ENCODE measurements at regions of chr22 and their contacts with region 1.

Region 1: DNA sequence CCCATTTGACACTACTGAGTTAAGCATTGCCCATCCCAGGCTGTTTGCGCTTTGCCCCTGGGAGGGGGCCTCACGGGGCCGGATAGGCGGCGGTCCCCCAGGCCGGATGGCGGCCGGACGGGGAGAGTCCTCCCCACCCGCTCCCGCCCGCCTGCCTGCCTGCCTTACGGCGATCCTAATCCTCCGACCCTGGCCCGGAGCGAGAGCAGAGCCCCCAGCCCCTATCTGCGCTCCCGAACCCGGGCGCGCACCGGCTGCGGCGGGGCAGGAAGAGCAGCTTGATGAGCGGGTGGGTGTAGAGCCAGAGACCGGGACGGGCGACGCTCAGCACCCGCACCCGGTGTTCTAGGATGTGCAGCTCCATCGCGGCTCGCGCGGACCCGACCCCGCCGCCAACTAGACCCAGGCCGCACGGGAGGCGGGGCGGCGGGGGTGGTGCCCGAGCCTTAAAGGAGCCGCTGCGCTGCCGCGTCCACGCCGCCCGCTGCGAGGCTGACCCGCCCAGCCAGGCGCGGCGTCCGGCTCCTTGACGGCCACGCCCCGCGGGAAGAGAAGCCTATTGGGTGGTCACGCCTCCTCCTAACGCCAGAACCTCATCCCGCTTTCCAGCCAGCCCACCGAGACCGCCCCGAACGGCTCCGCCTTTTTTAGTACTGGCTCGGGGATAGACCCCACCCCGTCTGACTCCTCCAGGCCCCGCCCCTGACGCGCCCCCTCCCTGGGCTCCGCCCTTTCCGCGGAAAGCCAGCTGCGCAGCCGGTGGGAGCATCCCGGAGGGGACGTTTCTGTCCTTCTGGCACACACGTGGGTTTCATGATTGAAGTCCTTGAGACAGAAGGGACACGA is at the start of gene CASTOR1:
- DNase-seq: peak; percentile 93
- H3K4me3 Mint-ChIP-seq: peak within 1 kb of the TSS; percentile 77
- H3K27ac Mint-ChIP-seq: peak within 1 kb of the TSS; percentile 8
- H3K4me1 Mint-ChIP-seq: peaks cover 31% of the 10 kb centered on the region
- H3K27me3 Mint-ChIP-seq: no peaks in the 10 kb centered on the region
- total RNA-seq, gene CASTOR1: 2.1 to 3.8 TPM

Region 2: GRCh38 chr22:29780748-29781676 is 508.3 kb before region 1 on chr22:
- CTCF ChIA-PET with region 1: no interaction called
- intact Hi-C with region 1: no loop called
- DNase-seq: no peak
- H3K4me3 Mint-ChIP-seq: no peak overlapping the region
- H3K27ac Mint-ChIP-seq: no peak overlapping the region
- H3K4me1 Mint-ChIP-seq: no peaks in the 10 kb centered on the region
- H3K27me3 Mint-ChIP-seq: no peaks in the 10 kb centered on the region

Region 3: DNA sequence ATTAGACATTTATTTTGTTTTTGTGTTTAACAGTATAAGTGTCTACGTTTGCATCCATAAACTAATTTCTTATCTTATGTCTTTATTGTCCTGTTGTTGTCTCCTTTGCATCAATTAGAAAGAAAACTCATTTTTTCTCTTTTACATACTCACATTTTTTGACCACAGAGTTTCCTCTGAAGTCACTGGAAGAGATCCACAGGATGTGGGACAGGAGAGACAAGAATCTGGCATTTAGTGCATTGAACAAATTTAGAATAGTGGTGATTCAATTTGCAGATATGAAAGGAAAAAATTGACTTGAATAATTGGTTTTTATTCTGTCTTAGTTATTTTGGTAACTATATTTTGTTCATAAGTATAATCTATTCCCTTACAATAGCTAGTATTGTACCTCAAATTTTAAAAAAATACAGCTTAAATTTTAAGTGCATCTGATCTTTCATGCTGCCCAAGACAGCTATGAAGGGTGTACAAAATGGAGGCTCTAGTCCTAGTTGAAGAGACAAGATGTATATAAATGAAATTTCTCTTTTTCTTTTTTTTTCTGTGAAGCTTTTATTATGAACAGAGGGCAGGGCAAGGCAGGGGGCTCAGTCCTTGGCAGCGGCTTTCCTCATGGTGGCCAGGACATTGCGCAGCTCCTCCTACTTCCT is 184.7 kb before region 1 on chr22:
- CTCF ChIA-PET with region 1: interaction called, 137 read pairs
- intact Hi-C with region 1: loop called (anchors 1 kb)
- DNase-seq: no peak
- H3K4me3 Mint-ChIP-seq: no peak overlapping the region
- H3K27ac Mint-ChIP-seq: peak overlapping the region; percentile 24
- H3K4me1 Mint-ChIP-seq: peaks cover 38% of the 10 kb centered on the region
- H3K27me3 Mint-ChIP-seq: no peaks in the 10 kb centered on the region

Region 4: GRCh38 chr22:30262917-30263741 is 26.2 kb before region 1 on chr22:
- CTCF ChIA-PET with region 1: interaction called, 74 read pairs
- intact Hi-C with region 1: loop called (anchors 1 kb)
- DNase-seq: peak; percentile 87
- H3K4me3 Mint-ChIP-seq: peak overlapping the region; percentile 65
- H3K27ac Mint-ChIP-seq: peak overlapping the region; percentile 43
- H3K4me1 Mint-ChIP-seq: peaks cover 39% of the 10 kb centered on the region
- H3K27me3 Mint-ChIP-seq: no peaks in the 10 kb centered on the region

Region 5: GRCh38 chr22:30326706-30327362 is 37.5 kb after region 1 on chr22 and contains the start of gene TBC1D10A:
- CTCF ChIA-PET with region 1: interaction called, 30 read pairs
- intact Hi-C with region 1: loop called (anchors 1 kb)
- DNase-seq: peak; percentile 95
- H3K4me3 Mint-ChIP-seq: peak within 1 kb of the TSS; percentile 82
- H3K27ac Mint-ChIP-seq: peak within 1 kb of the TSS; percentile 73
- H3K4me1 Mint-ChIP-seq: peaks cover 46% of the 10 kb centered on the region
- H3K27me3 Mint-ChIP-seq: no peaks in the 10 kb centered on the region
- total RNA-seq, gene TBC1D10A: 19.4 to 21.4 TPM

Region 6: DNA sequence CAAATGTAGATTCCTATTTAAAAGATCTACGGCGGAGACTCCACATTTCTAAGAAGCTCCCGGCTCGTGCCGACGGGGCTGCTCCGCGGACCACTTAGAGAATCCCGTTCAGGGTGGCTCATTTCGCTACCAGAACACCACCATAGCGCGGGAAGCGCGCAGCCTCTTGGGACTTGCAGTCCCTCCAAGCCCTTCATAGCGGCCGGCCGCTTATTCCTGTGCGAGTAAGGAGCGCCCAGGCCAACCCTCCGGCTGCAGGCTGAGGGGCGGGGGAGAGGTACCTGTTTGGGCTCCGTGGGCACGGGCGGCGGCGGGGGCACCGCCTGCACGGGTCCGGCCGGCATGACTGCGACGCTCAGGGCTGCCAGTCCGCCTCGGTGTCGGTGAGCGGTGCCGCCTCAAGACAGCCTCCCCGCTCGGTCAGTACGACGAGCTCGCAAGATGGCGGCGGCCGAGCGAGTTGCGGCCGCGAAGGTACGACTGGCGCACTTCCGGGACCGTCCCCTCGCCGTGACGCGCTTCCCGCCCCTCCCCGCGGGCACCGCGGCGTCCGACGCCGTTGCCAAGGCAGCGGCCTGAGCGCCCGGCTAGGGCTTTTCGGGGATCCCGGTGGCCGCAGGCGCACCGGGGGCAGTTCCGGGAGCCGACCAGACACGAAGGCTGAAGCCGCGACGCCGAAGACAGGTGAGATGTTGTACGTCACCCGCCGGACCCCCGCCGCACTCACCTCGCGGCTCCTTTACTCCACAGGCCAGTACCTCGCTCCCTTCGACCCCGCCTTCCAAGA is 67.3 kb after region 1 on chr22 and contains the starts of genes CCDC157 and SF3A1:
- CTCF ChIA-PET with region 1: interaction called, 8 read pairs
- intact Hi-C with region 1: loop called (anchors 1 kb)
- DNase-seq: peak; percentile 87
- H3K4me3 Mint-ChIP-seq: peak within 1 kb of the TSS; percentile 92
- H3K27ac Mint-ChIP-seq: peak within 1 kb of the TSS; percentile 84
- H3K4me1 Mint-ChIP-seq: peaks cover 50% of the 10 kb centered on the region
- H3K27me3 Mint-ChIP-seq: no peaks in the 10 kb centered on the region
- total RNA-seq, gene CCDC157: 1.1 to 1.5 TPM
- total RNA-seq, gene SF3A1: 274 to 276 TPM

Region 7: DNA sequence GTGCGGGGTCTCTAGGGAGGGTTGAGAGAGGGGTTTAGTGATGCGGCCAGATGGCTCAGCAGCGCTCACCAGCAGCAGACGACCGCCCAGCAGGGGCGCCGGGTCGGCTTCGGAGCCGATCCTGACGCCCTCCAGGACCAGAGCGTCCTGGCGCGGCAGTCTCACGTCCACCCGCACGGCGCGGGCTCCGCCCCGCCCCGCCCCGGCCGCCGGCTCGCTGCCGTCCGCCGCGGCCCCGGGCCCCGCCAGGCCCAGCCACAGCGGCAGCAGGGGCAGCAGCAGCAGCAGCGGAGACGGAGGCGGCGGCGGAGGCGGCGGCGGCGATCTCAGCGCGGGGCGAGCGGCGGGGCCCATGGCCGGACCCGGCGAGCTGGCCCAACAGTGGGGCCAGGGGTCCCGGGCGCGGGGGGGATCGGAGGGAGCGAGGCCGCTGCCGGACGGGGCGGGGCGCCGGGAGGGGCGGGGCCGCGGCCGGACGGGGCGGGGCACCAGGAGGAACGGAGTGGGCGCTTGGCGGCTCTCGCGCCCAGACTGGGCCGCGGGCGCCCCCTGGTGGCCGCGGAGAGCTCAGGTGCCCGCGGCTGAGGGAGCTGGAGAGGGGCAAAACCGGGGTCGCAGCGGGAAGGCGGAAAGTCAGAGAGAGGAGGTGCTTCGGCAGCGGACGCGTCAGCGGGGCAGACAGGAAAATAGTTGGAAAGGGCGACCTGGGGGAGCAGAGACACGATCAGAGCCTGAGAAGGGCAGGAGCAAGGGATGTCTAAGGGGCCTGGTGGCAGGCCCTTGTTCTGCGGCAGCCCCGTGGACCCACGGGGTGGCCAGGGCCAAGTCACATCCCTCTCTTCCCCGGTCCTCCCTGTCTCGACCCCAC is 97.8 kb after region 1 on chr22 and contains the start of gene RNF215:
- CTCF ChIA-PET with region 1: interaction called, 287 read pairs
- intact Hi-C with region 1: loop called (anchors 1 kb)
- DNase-seq: peak; percentile 68
- H3K4me3 Mint-ChIP-seq: peak within 1 kb of the TSS; percentile 74
- H3K27ac Mint-ChIP-seq: no peak within 1 kb of the TSS
- H3K4me1 Mint-ChIP-seq: peaks cover 13% of the 10 kb centered on the region
- H3K27me3 Mint-ChIP-seq: no peaks in the 10 kb centered on the region
- total RNA-seq, gene RNF215: 2.8 to 3.9 TPM

Region 8: DNA sequence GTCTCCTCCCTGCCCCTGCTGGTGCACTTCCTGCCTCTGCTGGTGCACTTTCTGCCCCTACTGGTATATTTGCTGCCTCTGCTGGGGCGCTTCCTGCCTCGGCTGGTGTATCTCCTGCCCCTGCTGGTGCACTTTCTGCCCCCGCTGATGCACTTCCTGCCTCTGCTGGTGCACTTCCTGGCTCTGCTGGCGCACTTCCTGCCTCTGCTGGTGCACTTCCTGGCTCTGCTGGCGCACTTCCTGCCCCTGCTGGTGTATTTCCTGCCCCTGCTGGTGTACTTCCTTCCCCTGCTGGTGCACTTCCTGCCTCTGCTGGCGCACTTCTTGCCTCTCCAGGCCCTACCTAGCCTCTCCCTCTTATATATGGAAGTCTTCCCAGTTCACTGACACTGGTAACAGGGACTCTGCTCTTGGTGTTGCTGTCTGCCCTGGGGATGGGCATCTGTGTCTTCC is 146.3 kb after region 1 on chr22:
- CTCF ChIA-PET with region 1: interaction called, 10 read pairs
- intact Hi-C with region 1: no loop called
- DNase-seq: peak; percentile 90
- H3K4me3 Mint-ChIP-seq: peak overlapping the region; percentile 84
- H3K27ac Mint-ChIP-seq: peak overlapping the region; percentile 95
- H3K4me1 Mint-ChIP-seq: peaks cover 22% of the 10 kb centered on the region
- H3K27me3 Mint-ChIP-seq: peaks cover 12% of the 10 kb centered on the region

Measured in activated naive CD4-positive, alpha-beta T cell treated with anti-CD3 and anti-CD28 coated beads for 36 hours (primary cell).